ENCODE measurements at regions of chr1 and their contacts with region 1.

Region 1: GRCh38 chr1:231091415-231091814 is 51.4 kb upstream of the FAM89A start:
- DNase-seq: no peak
- H3K4me3 ChIP-seq: no peak overlapping the region
- H3K27ac ChIP-seq: no peak overlapping the region
- H3K4me1 ChIP-seq: peaks cover 13% of the 10 kb centered on the region
- H3K27me3 ChIP-seq: no peaks in the 10 kb centered on the region
- CTCF ChIP-seq: no peak

Region 2: GRCh38 chr1:231072041-231072440 is 19.4 kb before region 1 on chr1:
- CTCF ChIA-PET with region 1: no interaction called
- POLR2A ChIA-PET with region 1: interaction called, 22 read pairs
- intact Hi-C with region 1: no loop called
- DNase-seq: no peak
- H3K4me3 ChIP-seq: no peak overlapping the region
- H3K27ac ChIP-seq: no peak overlapping the region
- H3K4me1 ChIP-seq: no peaks in the 10 kb centered on the region
- H3K27me3 ChIP-seq: no peaks in the 10 kb centered on the region
- CTCF ChIP-seq: no peak

Measured in A673 (cell line).